ENCODE measurements at regions of chr15 and their contacts with region 1.

Region 1: GRCh38 chr15:78422571-78423340 is 15.3 kb upstream of the IREB2 start:
- DNase-seq: peak; percentile 66
- H3K4me3 ChIP-seq: no peak overlapping the region
- H3K27ac ChIP-seq: no peak overlapping the region
- H3K4me1 ChIP-seq: no peaks in the 10 kb centered on the region
- H3K27me3 ChIP-seq: no peaks in the 10 kb centered on the region
- CTCF ChIP-seq: peak; percentile 94

Region 2: GRCh38 chr15:78438303-78439285 is 15.8 kb after region 1 on chr15:
- CTCF ChIA-PET with region 1: interaction called, 7 read pairs
- POLR2A ChIA-PET with region 1: interaction called, 10 read pairs
- intact Hi-C with region 1: no loop called
- DNase-seq: peak; percentile 44
- H3K4me3 ChIP-seq: peak overlapping the region; percentile 83
- H3K27ac ChIP-seq: peak overlapping the region; percentile 96
- H3K4me1 ChIP-seq: peaks cover 6% of the 10 kb centered on the region
- H3K27me3 ChIP-seq: no peaks in the 10 kb centered on the region
- CTCF ChIP-seq: 0 out of 2 replicates have a peak, but pooled peaks have one; percentile 35